Posterior vena cava (tissue), 2 donors: ENCODE measurements at regions of chr5 and their contacts with region 1.

Region 1: DNA sequence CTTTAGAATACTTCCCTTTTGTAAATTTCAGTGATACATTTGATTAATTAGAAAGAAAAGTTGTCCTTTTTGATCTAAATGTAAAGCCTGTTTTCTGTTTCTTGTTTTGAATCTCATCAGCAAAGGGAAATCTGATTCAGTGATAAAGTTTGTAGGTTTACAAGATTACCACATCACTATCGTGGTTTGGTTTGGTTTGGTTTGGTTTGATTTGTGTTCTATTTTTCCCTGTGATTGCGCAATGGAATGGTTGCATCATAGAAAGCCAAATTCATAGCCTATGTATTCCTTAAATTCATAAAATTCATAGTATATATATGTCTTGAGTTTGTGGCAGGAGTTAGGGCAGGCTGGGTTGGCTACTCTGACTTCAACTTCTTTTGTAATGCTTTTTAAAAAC is 15.2 kb downstream of the SRFBP1 start:
- DNase-seq: no peak

Region 2: GRCh38 chr5:121987685-121988073 is 10.7 kb after region 1 on chr5:
- intact Hi-C with region 1: loop called in 1 of 2 experiments (anchors 1 kb)
- DNase-seq: no peak

Region 3: DNA sequence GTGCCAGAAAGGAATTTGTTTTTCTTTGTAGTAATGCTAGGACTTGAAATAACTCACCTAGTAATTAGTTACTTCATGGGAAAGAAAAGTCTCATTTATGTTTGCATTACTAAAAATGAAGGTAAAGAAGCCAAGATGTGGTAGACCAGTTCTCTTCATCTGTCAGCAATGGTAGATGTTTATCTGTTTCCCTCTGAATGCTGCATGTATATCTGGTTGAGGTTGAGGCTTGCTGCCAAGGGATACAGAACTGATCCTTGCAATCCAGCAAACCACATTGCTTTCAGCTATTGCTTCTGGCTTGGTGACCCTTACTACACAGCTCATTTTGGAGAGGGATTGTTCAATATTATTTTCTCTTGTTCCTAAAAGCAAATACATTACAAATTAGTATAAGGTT is 226.0 kb after region 1 on chr5:
- intact Hi-C with region 1: no loop called
- DNase-seq: no peak

Region 4: GRCh38 chr5:122774519-122774860 is 797.5 kb after region 1 on chr5:
- intact Hi-C with region 1: no loop called
- DNase-seq: no peak